ENCODE measurements at regions of chr13 and their contacts with region 1.

Region 1: GRCh38 chr13:29892151-29892550 is 41.7 kb upstream of the UBL3 start:
- DNase-seq: no peak
- H3K4me3 Mint-ChIP-seq: no peak overlapping the region
- H3K27ac Mint-ChIP-seq: no peak overlapping the region
- H3K4me1 Mint-ChIP-seq: peaks cover 10% of the 10 kb centered on the region
- H3K27me3 Mint-ChIP-seq: no peaks in the 10 kb centered on the region
- CTCF ChIP-seq: no peak

Region 2: DNA sequence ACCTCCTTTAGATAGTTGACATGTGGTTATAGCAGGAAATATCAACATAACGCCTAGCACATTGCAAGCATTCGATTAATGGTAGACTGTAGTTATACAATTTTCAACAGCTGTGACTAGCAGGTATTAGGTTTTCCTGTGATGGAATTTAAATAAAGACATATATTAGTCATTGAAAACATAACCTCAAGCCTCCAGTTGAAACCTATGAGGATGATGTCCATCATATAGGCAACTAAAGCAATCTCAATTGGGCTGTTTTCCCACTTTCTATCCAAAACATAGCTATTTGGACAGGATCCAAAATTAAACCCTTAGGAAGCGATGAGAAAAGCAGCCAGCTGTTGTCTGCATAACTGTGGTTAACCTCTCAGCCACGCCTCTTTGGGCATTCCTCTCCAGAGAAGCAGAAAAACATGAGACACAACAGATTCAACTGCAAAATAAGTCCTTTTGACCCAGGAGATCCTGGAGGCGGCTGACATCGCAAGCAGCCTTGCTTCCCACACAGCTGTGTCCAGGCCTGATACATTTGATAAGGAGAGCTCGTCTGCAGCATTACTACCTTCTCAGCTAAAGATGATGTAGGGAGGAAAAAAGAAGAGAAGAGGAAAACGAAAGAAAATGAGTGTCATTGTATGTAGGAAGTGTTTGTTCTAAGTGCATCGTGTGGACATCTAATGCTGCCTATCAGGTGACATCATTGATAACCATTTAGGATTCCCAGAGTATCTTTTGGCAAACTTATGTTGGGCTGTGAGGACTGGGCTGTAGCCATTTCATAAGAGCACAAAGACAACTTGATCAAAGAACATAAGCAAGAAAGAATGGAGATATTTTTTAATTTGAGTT is 10.2 kb after region 1 on chr13:
- CTCF ChIA-PET with region 1: no interaction called
- POLR2A ChIA-PET with region 1: interaction called, 11 read pairs
- intact Hi-C with region 1: no loop called
- DNase-seq: peak; percentile 94
- H3K4me3 Mint-ChIP-seq: peak overlapping the region; percentile 59
- H3K27ac Mint-ChIP-seq: peak overlapping the region; percentile 90
- H3K4me1 Mint-ChIP-seq: peaks cover 30% of the 10 kb centered on the region
- H3K27me3 Mint-ChIP-seq: no peaks in the 10 kb centered on the region
- CTCF ChIP-seq: no peak